Transverse colon (tissue), 4 donors: ENCODE measurements at regions of chrX and their contacts with region 1.

Region 1: DNA sequence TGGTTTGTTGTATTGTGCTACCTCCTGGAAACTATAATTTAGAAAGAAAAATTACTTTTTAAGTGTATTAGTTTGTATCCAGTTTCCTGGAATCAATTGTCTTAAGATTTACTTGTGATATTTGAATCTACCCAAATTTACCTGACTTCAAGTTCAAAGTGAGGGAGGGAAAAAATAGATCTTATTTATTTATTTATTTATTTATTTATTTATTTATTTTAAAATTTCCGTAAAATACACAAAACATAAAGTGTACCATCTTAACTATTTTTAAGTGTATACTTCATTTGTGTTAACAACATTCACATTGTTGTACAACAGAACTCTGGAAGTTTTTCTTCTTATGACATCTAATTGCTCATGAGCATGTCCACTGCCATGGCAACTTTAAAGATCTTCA is 356.0 kb downstream of the DACH2 start:
- DNase-seq: no peak
- H3K4me3 ChIP-seq: no peak overlapping the region
- H3K27ac ChIP-seq: no peak overlapping the region
- H3K4me1 ChIP-seq: no peaks in the 10 kb centered on the region
- H3K27me3 ChIP-seq: no peaks in the 10 kb centered on the region
- CTCF ChIP-seq: no peak
- EP300 ChIP-seq: no peak
- POLR2A ChIP-seq: no peak

Region 2: DNA sequence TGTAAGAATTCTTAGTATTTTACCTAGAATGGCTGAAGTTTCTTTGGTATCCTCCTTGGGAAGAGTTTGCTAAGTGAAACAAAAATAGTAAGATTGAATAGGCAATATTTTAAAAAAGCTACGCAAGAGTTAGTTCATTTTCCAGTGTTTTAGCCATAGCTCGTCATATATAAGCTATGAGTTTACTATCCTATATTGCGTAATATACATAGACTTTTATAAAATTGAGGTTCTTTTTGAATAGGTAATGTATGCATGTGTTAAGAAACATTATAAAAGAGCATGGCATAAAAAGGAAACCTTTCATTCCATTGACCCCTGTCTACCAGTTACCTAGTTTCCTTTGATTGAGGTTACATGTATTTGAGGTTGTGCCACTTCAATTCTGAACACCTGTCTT is 289.0 kb before region 1 on chrX:
- in situ Hi-C with region 1: no loop called
- intact Hi-C with region 1: no loop called
- DNase-seq: no peak
- H3K4me3 ChIP-seq: no peak overlapping the region
- H3K27ac ChIP-seq: no peak overlapping the region
- H3K4me1 ChIP-seq: no peaks in the 10 kb centered on the region
- H3K27me3 ChIP-seq: no peaks in the 10 kb centered on the region
- CTCF ChIP-seq: no peak
- EP300 ChIP-seq: no peak
- POLR2A ChIP-seq: no peak

Region 3: DNA sequence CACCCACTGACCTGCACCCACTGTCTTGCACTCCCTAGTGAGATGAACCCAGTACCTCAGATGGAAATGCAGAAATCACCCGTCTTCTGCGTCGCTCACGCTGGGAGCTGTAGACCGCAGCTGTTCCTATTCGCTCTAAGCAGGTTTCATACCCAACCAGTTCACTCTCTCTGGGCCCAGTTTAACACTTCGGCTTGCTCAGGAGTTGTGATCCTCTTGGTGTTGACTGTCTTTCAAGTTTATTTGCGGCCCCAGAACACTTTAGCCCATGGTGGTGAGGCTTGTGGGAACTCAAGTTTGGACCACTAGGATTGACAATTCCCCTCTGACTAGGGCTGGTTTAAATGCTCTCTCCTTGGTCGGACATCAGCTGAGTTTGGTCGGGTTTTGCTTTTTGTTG is 209.0 kb before region 1 on chrX:
- in situ Hi-C with region 1: no loop called
- intact Hi-C with region 1: no loop called
- DNase-seq: no peak
- H3K4me3 ChIP-seq: no peak overlapping the region
- H3K27ac ChIP-seq: no peak overlapping the region
- H3K4me1 ChIP-seq: no peaks in the 10 kb centered on the region
- H3K27me3 ChIP-seq: no peaks in the 10 kb centered on the region
- CTCF ChIP-seq: no peak
- EP300 ChIP-seq: no peak
- POLR2A ChIP-seq: no peak

Region 4: GRCh38 chrX:87110142-87110541 is 605.8 kb after region 1 on chrX:
- in situ Hi-C with region 1: no loop called
- intact Hi-C with region 1: loop called (anchors 5 kb)
- DNase-seq: no peak
- H3K4me3 ChIP-seq: no peak overlapping the region
- H3K27ac ChIP-seq: no peak overlapping the region
- H3K4me1 ChIP-seq: no peaks in the 10 kb centered on the region
- H3K27me3 ChIP-seq: no peaks in the 10 kb centered on the region
- CTCF ChIP-seq: no peak
- EP300 ChIP-seq: no peak
- POLR2A ChIP-seq: no peak